ENCODE measurements at regions of chr7 and their contacts with region 1.

Region 1: GRCh38 chr7:129605960-129606614 is 5.4 kb upstream of the NRF1 start:
- DNase-seq: no peak
- ATAC-seq: no peak
- H3K4me3 ChIP-seq: no peak overlapping the region
- H3K27ac ChIP-seq: no peak overlapping the region
- H3K4me1 ChIP-seq: peaks cover 7% of the 10 kb centered on the region; the same call in 1 of the 2 replicates
- H3K27me3 ChIP-seq: no peaks in the 10 kb centered on the region
- CTCF ChIP-seq: no peak

Region 2: GRCh38 chr7:129588268-129588667 is 17.8 kb before region 1 on chr7:
- CTCF ChIA-PET with region 1: no interaction called
- POLR2A ChIA-PET with region 1: interaction called, 11 read pairs
- in situ Hi-C with region 1: no loop called
- intact Hi-C with region 1: no loop called
- DNase-seq: no peak
- ATAC-seq: no peak
- H3K4me3 ChIP-seq: no peak overlapping the region
- H3K27ac ChIP-seq: no peak overlapping the region
- H3K4me1 ChIP-seq: no peaks in the 10 kb centered on the region
- H3K27me3 ChIP-seq: no peaks in the 10 kb centered on the region
- CTCF ChIP-seq: no peak

Region 3: DNA sequence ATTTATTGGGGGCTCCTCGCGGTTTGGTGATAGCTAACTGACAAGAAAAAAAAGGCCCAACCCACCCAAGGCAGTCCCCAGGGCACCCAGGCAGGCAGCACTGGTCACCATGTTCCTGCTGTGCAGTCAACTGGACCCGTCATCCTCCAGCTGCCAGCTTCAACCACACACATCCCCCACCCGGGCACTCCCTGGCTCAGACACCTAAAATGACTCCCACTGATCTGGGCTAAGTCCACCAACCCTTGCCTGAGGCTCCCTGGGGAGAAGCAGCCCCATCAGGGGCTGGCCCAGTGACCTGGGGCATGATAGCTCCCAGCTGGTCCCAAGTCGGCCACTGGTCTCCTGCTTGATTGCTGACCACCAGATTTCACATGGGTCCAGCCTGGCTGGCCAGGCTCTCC is 167.2 kb after region 1 on chr7:
- CTCF ChIA-PET with region 1: no interaction called
- POLR2A ChIA-PET with region 1: interaction called, 14 read pairs
- in situ Hi-C with region 1: no loop called
- intact Hi-C with region 1: no loop called
- DNase-seq: no peak
- ATAC-seq: no peak
- H3K4me3 ChIP-seq: no peak overlapping the region
- H3K27ac ChIP-seq: no peak overlapping the region
- H3K4me1 ChIP-seq: peaks cover 3% of the 10 kb centered on the region; the same call in 1 of the 2 replicates
- H3K27me3 ChIP-seq: no peaks in the 10 kb centered on the region
- CTCF ChIP-seq: no peak

Measured in Panc1 (cell line).